ENCODE measurements at regions of chr12 and their contacts with region 1.

Region 1: DNA sequence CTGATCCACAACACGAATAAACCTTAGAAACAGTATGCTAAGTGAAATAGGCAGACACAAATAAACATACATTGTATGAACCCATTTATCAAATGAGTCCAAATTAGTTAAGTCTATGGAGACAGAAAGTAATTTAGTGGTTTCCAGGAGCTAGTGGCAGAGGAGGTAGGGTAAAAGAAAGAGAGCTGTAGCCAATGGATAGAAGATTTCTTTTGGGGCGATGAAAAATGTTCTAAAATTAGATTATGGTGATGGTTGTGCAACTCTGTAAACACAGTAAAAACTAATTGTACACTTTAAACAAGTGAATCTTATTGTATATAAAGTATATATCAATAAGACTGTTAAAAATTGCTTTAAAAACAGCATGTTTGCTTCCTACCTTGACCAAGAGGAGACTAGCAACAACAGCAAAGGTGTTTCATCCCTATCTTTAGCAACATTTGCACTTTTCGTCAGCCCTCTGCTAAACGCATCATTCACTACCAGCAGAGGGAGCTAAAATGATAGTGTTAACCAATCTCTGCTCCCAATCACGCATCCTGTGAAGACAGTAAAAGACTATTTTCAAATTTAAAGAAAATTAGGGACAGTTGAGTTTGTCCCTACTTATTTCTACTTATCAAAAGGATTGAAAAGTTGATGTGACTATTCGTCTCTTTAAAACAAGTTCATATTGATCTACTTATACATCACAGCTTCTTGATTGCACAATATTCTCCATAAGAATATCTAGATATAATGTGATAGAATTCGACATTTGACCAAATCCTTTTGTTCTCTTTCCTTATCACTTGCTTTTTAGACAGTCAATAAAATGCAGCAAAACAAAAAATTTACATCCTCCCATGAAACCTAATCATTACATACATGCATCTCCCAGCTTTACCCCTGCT is 24.0 kb upstream of the LGR5 start:
- DNase-seq: peak; percentile 72
- H3K4me3 Mint-ChIP-seq: no peak overlapping the region
- H3K27ac Mint-ChIP-seq: no peak overlapping the region
- H3K4me1 Mint-ChIP-seq: no peaks in the 10 kb centered on the region
- H3K27me3 Mint-ChIP-seq: no peaks in the 10 kb centered on the region
- CTCF ChIP-seq: peak; percentile 73

Region 2: DNA sequence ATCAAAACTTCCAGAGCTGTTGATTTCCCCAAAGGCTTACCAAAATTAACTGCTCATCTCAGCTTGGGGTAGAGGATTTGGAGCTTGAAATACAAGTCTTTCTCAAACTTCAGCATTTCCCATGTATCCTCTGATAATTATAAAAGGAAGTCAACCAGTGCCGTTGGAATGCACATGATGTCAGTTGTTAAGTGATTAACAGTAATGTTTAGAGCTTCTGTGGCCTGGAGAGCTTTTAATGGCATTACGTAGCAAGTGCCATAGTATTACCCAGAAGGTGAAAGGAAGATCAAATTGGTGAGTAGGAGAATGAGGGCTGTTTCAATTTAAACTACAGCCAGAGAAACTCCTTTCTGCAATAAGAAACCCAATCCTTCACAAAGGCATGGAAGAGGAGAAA is 432.6 kb before region 1 on chr12:
- CTCF ChIA-PET with region 1: no interaction called
- POLR2A ChIA-PET with region 1: no interaction called
- intact Hi-C with region 1: no loop called
- DNase-seq: no peak
- H3K4me3 Mint-ChIP-seq: no peak overlapping the region
- H3K27ac Mint-ChIP-seq: peak overlapping the region; percentile 16
- H3K4me1 Mint-ChIP-seq: peaks cover 41% of the 10 kb centered on the region
- H3K27me3 Mint-ChIP-seq: no peaks in the 10 kb centered on the region
- CTCF ChIP-seq: no peak

Region 3: DNA sequence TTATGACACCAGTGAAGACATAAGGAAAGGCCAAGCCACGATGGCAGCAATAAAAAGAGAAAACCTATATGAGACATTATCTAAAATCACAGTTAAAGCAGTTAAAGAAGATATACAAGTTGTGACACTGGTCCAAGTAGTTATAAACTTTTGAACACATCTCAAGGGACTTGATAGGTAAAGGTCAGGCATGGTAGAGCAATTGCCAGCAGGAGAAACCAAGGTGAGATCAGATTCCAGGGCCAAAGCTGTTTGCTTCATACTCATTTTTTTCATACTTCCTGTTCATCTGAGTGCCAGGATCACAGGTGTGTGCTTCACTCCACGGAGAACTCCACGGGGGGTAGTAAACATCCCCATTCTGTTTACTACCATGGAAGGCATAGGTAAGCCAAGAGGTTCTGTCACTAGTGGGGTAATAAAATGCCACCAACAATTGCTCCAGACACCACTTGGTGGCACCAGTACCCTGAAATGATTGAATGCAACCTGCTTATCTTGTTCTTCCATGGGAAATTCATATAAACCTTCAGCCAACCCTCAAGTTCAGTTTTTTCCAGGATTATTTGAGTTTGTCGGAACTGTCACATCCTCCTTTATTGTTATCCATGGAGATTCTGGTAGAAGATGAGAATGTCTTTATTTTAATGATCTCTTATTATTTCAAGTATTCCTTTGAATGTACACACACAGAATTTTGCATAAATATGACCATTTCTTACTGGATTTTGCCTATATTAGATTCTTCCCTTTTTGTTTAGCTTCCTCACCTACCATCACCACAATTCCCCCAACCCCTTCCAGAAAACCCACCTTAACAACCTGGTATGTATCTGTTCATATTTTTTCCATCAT is 198.6 kb before region 1 on chr12:
- CTCF ChIA-PET with region 1: no interaction called
- POLR2A ChIA-PET with region 1: no interaction called
- intact Hi-C with region 1: no loop called
- DNase-seq: peak; percentile 69
- H3K4me3 Mint-ChIP-seq: no peak overlapping the region
- H3K27ac Mint-ChIP-seq: no peak overlapping the region
- H3K4me1 Mint-ChIP-seq: no peaks in the 10 kb centered on the region
- H3K27me3 Mint-ChIP-seq: no peaks in the 10 kb centered on the region
- CTCF ChIP-seq: peak; percentile 55

Region 4: DNA sequence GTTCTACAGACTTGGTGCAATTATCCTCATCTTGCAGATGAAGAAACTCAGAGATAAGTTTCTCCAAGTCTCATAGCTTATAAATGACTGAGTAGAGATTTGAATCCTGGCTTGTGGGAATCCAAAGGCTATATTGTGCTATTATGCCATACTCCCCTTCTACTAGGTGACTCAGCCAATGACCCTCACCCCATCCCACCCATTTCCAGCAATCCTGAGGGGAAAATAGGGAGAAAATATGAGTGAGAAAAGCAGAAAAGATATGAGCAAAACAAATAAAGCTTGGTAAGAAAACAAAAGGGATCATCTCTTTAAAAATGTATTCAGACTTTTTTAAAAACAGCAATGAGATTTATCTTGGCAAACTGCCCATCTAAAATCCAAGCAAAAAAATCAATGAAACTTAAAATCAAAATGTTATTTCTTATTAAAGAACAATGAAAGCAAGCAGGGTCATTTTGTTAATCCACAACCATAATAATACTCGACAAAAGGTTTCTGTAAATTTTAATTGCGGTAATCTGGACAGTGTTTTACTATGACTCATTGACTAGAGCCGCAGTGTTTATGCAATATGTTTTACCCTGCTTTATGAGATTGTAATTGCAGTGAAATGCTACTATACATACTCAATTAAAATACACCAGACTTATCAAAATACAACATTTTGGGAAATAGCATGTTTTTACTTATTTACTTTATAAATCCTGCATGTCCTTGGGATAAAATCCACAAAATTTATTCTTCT is 10.9 kb after region 1 on chr12:
- CTCF ChIA-PET with region 1: interaction called, 11 read pairs
- POLR2A ChIA-PET with region 1: interaction called, 3 read pairs
- intact Hi-C with region 1: no loop called
- DNase-seq: peak; percentile 57
- H3K4me3 Mint-ChIP-seq: no peak overlapping the region
- H3K27ac Mint-ChIP-seq: no peak overlapping the region
- H3K4me1 Mint-ChIP-seq: peaks cover 9% of the 10 kb centered on the region
- H3K27me3 Mint-ChIP-seq: no peaks in the 10 kb centered on the region
- CTCF ChIP-seq: no peak

Region 5: GRCh38 chr12:71551529-71551928 is 135.9 kb after region 1 on chr12:
- CTCF ChIA-PET with region 1: interaction called, 74 read pairs
- POLR2A ChIA-PET with region 1: interaction called, 4 read pairs
- intact Hi-C with region 1: loop called (anchors 1 kb)
- DNase-seq: peak; percentile 41
- H3K4me3 Mint-ChIP-seq: no peak overlapping the region
- H3K27ac Mint-ChIP-seq: no peak overlapping the region
- H3K4me1 Mint-ChIP-seq: no peaks in the 10 kb centered on the region
- H3K27me3 Mint-ChIP-seq: no peaks in the 10 kb centered on the region
- CTCF ChIP-seq: peak; percentile 44

Region 6: DNA sequence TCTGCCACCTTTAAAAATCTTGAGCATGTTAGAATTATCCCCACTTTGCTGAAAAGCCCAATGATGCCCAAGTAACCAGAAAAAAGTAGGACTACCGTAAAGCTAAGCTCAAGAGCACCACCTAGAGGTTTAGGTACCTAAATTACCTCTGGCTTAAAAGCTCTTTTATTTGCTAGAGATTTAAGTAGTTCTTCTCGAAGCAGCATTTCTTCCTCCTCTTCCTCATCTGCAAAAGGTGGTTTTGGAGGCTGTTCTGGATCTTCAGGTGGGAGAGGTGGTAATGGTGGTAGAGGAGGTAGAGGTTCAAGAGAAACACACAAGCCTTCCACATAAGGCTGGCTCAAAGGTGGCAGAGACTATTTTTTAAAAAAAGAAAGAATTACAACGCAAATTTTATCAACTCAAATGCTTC is 221.1 kb after region 1 on chr12:
- CTCF ChIA-PET with region 1: interaction called, 15 read pairs
- POLR2A ChIA-PET with region 1: interaction called, 3 read pairs
- intact Hi-C with region 1: loop called (anchors 1 kb)
- DNase-seq: peak; percentile 70
- H3K4me3 Mint-ChIP-seq: no peak overlapping the region
- H3K27ac Mint-ChIP-seq: no peak overlapping the region
- H3K4me1 Mint-ChIP-seq: peaks cover 6% of the 10 kb centered on the region
- H3K27me3 Mint-ChIP-seq: no peaks in the 10 kb centered on the region
- CTCF ChIP-seq: peak; percentile 66

Region 7: DNA sequence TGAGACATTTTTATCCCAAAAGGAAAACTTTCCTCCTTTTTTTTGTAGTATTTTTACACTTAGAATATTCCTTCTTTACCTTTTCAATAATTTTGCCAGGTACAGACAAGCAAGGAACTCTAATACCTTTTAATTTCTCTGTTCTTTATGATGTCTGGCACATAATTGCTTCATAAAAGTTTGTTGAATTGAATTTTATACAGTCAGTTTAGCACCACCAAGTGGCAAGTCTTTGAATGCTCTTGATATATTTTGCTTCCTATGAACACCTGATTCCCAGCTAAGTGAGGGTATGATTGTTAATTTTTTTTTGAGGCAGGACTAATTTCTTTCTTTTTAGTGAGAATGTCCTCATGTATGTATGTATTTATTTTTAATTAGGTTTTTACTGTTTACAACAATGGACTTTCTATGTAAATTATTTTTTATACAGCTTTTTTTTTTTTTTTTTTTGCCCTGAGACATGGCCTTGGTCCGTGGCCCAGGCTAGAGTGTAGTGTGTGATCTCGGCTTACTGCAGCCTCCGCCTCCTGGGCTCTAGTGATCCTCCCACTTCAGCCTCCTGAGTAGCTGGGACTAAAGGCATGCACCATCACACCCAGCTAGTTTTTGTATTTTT is 430.8 kb after region 1 on chr12:
- CTCF ChIA-PET with region 1: no interaction called
- POLR2A ChIA-PET with region 1: no interaction called
- intact Hi-C with region 1: no loop called
- DNase-seq: peak; percentile 57
- H3K4me3 Mint-ChIP-seq: no peak overlapping the region
- H3K27ac Mint-ChIP-seq: no peak overlapping the region
- H3K4me1 Mint-ChIP-seq: peaks cover 4% of the 10 kb centered on the region
- H3K27me3 Mint-ChIP-seq: no peaks in the 10 kb centered on the region
- CTCF ChIP-seq: peak; percentile 48